Activated CD4-positive, alpha-beta memory T cell treated with anti-CD3 and anti-CD28 coated beads for 36 hours (primary cell): ENCODE measurements at regions of chr9 and their contacts with region 1.

Region 1: DNA sequence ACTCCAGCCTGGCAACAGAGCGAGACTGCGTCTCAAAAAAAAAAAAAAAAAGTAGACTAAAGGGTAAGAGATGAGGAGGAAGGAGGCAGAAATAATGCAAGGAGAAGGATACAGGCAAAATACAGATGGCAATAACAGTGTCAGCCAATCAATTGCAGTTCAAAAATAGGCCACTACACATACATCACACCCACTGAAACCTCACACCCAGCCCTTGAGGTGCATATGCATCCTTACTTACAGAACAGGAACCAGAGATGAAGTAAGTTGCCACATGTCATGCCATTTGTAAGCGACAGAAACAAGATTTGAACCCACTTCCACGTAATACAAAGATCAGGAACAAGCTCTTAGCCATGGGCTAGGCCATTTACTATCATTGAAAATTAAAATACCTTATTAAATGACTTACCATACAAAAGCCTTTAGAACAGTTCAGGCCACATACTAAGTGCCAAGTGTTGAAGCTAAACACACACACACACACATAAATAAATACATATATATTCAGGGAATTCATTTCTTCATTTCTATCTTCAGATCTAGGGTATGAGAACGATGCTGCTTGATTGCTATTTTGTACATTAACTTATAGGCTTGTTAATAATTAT is 98.4 kb downstream of the FNBP1 start:
- DNase-seq: peak; percentile 76
- H3K4me3 Mint-ChIP-seq: peak overlapping the region; percentile 12
- H3K27ac Mint-ChIP-seq: peak overlapping the region; percentile 71
- H3K4me1 Mint-ChIP-seq: peaks cover 49% of the 10 kb centered on the region
- H3K27me3 Mint-ChIP-seq: no peaks in the 10 kb centered on the region

Region 2: DNA sequence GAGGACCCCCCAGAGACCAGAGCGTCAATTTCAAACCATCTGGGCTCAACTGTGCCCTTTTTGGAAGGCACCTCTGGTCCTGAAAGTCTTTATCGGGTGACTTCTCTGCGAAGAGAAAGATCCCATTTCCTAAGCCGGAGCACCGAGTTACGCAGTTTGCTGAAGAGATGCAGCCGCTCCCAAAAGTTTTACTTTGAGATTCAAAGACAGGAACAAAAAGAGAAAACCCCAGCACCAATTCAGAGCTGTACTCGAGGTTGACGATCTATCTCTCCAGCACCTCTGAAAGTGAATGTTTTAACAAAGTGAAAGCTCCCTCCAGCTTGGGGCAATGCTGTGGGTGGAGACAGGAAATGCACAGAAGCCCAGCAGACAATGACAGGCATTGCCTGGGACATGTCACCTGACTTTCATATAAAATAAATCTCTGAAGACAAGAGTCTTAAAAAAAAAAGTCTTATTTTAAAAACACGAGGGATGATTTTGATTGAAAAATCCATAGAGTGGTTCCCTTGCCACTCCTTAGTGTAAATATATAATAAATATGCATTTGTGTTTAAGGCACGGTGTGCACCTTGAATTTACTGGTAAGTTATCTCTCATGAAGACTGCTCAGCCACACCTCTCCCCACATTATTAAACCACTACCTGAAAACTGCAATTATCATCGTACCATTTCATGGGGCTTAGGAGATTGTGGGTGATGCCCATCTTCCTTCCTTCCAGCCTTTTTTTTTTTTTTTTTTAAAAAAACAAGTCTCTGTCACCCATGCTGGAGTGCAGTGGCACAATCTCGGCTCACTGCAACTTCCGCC is 18.5 kb after region 1 on chr9:
- CTCF ChIA-PET with region 1: interaction called, 3 read pairs
- POLR2A ChIA-PET with region 1: interaction called, 3 read pairs
- intact Hi-C with region 1: loop called (anchors 2 kb)
- DNase-seq: peak; percentile 86
- H3K4me3 Mint-ChIP-seq: peak overlapping the region; percentile 77
- H3K27ac Mint-ChIP-seq: peak overlapping the region; percentile 92
- H3K4me1 Mint-ChIP-seq: peaks cover 76% of the 10 kb centered on the region
- H3K27me3 Mint-ChIP-seq: no peaks in the 10 kb centered on the region